AG04450 (cell line): ENCODE measurements at regions of chr11 and their contacts with region 1.

Region 1: GRCh38 chr11:123020968-123021367 is 39.3 kb upstream of the BSX start:
- DNase-seq: peak; percentile 29
- H3K4me3 ChIP-seq: no peak overlapping the region
- H3K27ac ChIP-seq: no peak overlapping the region
- H3K27me3 ChIP-seq: peaks cover 25% of the 10 kb centered on the region
- CTCF ChIP-seq: peak; percentile 74

Region 2: GRCh38 chr11:122863704-122864326 is 157.2 kb before region 1 on chr11:
- CTCF ChIA-PET with region 1: interaction called, 324 read pairs
- POLR2A ChIA-PET with region 1: no interaction called
- DNase-seq: no peak
- H3K4me3 ChIP-seq: no peak overlapping the region
- H3K27ac ChIP-seq: no peak overlapping the region
- H3K27me3 ChIP-seq: peaks cover 22% of the 10 kb centered on the region
- CTCF ChIP-seq: peak; percentile 93

Region 3: GRCh38 chr11:122902951-122903350 is 118.0 kb before region 1 on chr11:
- CTCF ChIA-PET with region 1: interaction called, 14 read pairs
- POLR2A ChIA-PET with region 1: no interaction called
- DNase-seq: no peak
- H3K4me3 ChIP-seq: no peak overlapping the region
- H3K27ac ChIP-seq: no peak overlapping the region
- H3K27me3 ChIP-seq: no peaks in the 10 kb centered on the region
- CTCF ChIP-seq: no peak

Region 4: DNA sequence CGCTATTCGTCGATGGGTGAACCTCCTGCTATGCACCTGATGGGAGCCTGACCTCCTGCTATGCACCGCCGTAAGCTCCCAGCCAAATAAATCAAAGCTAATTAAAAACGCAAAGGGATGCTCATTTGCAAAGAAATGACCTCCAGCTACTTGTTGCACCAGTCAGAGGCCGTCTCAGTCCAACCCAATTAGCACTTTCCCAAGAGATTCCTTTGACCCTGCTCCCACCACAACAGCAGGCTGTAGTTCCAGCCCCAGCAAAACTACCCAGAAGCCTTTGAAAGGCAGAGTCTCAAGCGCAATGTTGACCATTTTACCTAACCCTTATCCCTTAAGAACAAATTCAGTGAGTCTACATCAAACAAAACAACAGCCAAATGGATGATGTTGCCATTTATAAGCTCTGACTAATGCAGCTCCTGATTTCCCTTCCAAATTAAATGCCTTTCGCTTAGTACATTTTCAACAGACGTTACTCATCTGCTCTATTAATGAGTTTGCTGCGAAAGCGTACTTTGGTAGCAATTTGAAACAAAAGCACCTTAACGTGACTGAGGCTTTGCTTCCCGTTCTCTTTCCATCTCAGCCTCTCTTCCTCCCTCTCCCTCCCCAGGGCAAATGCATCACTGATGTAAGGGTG is 22.1 kb before region 1 on chr11:
- CTCF ChIA-PET with region 1: interaction called, 19 read pairs
- POLR2A ChIA-PET with region 1: no interaction called
- DNase-seq: no peak
- H3K4me3 ChIP-seq: no peak overlapping the region
- H3K27ac ChIP-seq: no peak overlapping the region
- H3K27me3 ChIP-seq: peaks cover 10% of the 10 kb centered on the region
- CTCF ChIP-seq: no peak

Region 5: DNA sequence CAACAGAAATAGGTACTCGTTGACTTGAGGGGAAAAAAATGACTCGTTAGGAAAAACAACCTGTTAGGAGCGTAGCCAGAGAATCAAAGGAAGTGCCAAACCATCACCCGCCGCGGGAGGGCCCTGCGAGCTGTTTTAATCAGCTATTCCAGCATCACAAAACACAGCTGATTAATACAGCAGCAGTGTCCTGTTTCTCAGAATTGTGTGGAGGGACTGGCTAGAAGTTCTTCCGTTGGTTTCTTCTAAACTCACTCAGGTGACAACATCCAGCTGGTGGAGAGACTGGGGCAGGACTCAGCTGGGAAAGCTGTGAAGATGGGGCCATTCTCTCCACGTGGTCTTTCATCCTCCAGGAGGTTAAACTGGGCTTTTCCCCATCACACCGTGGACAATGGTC is 12.9 kb after region 1 on chr11:
- CTCF ChIA-PET with region 1: interaction called, 43 read pairs
- POLR2A ChIA-PET with region 1: no interaction called
- DNase-seq: no peak
- H3K4me3 ChIP-seq: no peak overlapping the region
- H3K27ac ChIP-seq: no peak overlapping the region
- H3K27me3 ChIP-seq: peaks cover 5% of the 10 kb centered on the region
- CTCF ChIP-seq: peak; percentile 39; the same call in 1 of the 2 replicates

Region 6: GRCh38 chr11:123054301-123055065 is 33.5 kb after region 1 on chr11:
- CTCF ChIA-PET with region 1: interaction called, 28 read pairs
- POLR2A ChIA-PET with region 1: no interaction called
- DNase-seq: peak; percentile 39
- H3K4me3 ChIP-seq: no peak overlapping the region
- H3K27ac ChIP-seq: no peak overlapping the region
- H3K27me3 ChIP-seq: no peaks in the 10 kb centered on the region
- CTCF ChIP-seq: peak; percentile 74

Region 7: GRCh38 chr11:123083623-123084029 is 62.7 kb after region 1 on chr11:
- CTCF ChIA-PET with region 1: no interaction called
- POLR2A ChIA-PET with region 1: no interaction called
- DNase-seq: peak; percentile 90
- H3K4me3 ChIP-seq: no peak overlapping the region
- H3K27ac ChIP-seq: peak overlapping the region; percentile 71
- H3K27me3 ChIP-seq: no peaks in the 10 kb centered on the region
- CTCF ChIP-seq: no peak